SK-N-SH (cell line): ENCODE measurements at regions of chr9 and their contacts with region 1.

Region 1: DNA sequence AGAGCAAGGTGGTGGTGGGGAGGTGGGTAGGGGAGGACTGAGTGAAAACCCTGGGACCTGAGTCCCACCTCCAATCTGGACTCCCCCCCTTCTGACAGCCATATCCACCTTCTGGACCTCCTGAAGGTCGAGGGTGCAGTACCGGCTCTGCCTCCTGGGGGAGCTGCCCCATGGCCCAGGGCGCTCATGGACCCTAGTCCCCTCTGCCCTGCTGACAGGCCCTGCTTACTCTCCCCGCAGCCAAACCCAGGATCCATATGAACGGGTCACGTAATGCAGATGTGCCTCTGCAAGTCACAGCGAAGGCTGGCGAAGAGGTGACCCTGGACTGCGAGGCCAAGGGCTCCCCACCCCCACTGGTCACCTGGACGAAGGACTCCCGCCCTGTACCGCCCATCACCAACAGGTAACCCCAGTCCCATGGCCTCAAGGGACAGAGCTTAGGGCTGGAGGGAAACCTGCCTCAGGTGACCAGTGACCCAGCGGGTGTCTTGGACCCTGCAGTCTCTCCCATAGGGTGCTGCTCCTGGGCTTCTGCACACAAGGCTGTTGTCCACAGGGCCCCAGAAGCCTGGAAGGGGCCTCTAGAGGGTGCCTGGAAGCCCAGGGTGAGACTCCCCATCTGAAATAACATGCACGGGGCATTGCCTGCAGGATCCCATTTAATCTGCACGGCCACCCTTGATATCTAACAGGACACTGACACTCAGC is 61.7 kb downstream of the HMCN2 start:
- DNase-seq: peak; percentile 82
- H3K4me3 ChIP-seq: no peak overlapping the region; a peak in 1 of 4 replicates
- H3K27ac ChIP-seq: peak overlapping the region in 1 of 2 experiments; percentile 99; a peak in 2 of 4 replicates
- H3K4me1 ChIP-seq: peaks cover 0 to 81% of the 10 kb centered on the region in 2 experiments; a peak in 2 of 4 replicates
- H3K27me3 ChIP-seq: peaks cover 14% of the 10 kb centered on the region; the same call in 1 of the 2 replicates
- CTCF ChIP-seq: peak; percentile 38
- EP300 ChIP-seq: no peak
- RAD21 ChIP-seq: peak; percentile 33; the same call in 1 of the 2 replicates

Region 2: GRCh38 chr9:130138171-130138653 is 189.0 kb before region 1 on chr9:
- CTCF ChIA-PET with region 1: no interaction called
- POLR2A ChIA-PET with region 1: no interaction called
- DNase-seq: no peak
- H3K4me3 ChIP-seq: no peak overlapping the region
- H3K27ac ChIP-seq: peak overlapping the region; percentile 60 to 77; a peak in 3 of 4 replicates
- H3K4me1 ChIP-seq: peaks cover 24 to 30% of the 10 kb centered on the region in 2 experiments; a peak in 3 of 4 replicates
- H3K27me3 ChIP-seq: no peaks in the 10 kb centered on the region
- CTCF ChIP-seq: no peak
- EP300 ChIP-seq: no peak
- RAD21 ChIP-seq: no peak

Region 3: GRCh38 chr9:130301483-130302286 is 25.5 kb before region 1 on chr9:
- CTCF ChIA-PET with region 1: interaction called, 30 read pairs
- POLR2A ChIA-PET with region 1: no interaction called
- DNase-seq: peak; percentile 59
- H3K4me3 ChIP-seq: no peak overlapping the region
- H3K27ac ChIP-seq: no peak overlapping the region
- H3K4me1 ChIP-seq: peaks cover 0 to 41% of the 10 kb centered on the region in 2 experiments; a peak in 2 of 4 replicates
- H3K27me3 ChIP-seq: no peaks in the 10 kb centered on the region
- CTCF ChIP-seq: no peak
- EP300 ChIP-seq: no peak
- RAD21 ChIP-seq: no peak

Region 4: DNA sequence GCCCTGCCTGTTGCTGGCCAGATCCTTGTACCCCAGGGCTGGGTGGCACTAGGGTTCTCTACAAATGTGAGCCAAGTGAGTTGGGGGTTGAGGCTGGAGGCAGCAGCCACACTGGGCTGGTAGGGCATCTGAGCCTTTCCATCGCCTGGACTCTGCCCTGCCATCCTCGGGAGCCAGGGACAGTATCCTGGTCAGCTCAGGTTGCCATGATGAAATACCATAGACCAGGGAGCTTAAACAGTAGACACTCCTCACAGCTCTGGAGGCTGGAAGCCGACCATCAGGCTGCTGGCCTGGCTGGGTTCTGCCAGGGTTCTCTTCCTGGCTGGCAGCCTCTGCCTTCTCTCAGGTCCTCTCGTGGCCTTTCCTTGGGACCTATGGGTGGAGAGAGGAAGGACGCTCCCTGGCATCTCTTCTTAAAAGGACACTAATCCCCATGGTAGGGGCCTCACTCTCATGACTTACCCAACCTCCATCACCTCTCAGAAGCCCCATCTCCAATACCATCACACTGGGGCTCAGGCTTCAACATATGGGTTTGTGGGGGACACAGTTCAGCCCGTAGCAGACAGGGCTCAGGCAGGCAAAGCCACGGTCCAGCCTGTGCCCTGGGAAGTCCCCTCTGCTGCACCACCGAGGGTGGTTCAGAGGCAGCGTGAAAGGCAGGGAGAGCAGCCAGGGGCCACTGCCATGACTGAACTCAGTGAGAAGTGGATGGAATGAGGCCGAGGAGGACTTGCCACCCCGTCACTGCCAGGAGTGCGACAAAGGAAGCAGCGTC is 11.6 kb before region 1 on chr9:
- CTCF ChIA-PET with region 1: interaction called, 11 read pairs
- POLR2A ChIA-PET with region 1: no interaction called
- DNase-seq: no peak
- H3K4me3 ChIP-seq: no peak overlapping the region
- H3K27ac ChIP-seq: no peak overlapping the region
- H3K4me1 ChIP-seq: peaks cover 0 to 20% of the 10 kb centered on the region in 2 experiments; a peak in 1 of 4 replicates
- H3K27me3 ChIP-seq: no peaks in the 10 kb centered on the region
- CTCF ChIP-seq: no peak
- EP300 ChIP-seq: no peak
- RAD21 ChIP-seq: no peak

Region 5: GRCh38 chr9:130343445-130343918 is 16.3 kb after region 1 on chr9:
- CTCF ChIA-PET with region 1: interaction called, 49 read pairs
- POLR2A ChIA-PET with region 1: no interaction called
- DNase-seq: peak; percentile 88
- H3K4me3 ChIP-seq: peak overlapping the region in 1 of 2 experiments; percentile 35; a peak in 1 of 4 replicates
- H3K27ac ChIP-seq: no peak overlapping the region
- H3K4me1 ChIP-seq: peaks cover 0 to 6% of the 10 kb centered on the region in 2 experiments; a peak in 1 of 4 replicates
- H3K27me3 ChIP-seq: no peaks in the 10 kb centered on the region
- CTCF ChIP-seq: peak; percentile 89
- EP300 ChIP-seq: no peak
- RAD21 ChIP-seq: peak; percentile 83